H1 (cell line): ENCODE measurements at regions of chr14 and their contacts with region 1.

Region 1: DNA sequence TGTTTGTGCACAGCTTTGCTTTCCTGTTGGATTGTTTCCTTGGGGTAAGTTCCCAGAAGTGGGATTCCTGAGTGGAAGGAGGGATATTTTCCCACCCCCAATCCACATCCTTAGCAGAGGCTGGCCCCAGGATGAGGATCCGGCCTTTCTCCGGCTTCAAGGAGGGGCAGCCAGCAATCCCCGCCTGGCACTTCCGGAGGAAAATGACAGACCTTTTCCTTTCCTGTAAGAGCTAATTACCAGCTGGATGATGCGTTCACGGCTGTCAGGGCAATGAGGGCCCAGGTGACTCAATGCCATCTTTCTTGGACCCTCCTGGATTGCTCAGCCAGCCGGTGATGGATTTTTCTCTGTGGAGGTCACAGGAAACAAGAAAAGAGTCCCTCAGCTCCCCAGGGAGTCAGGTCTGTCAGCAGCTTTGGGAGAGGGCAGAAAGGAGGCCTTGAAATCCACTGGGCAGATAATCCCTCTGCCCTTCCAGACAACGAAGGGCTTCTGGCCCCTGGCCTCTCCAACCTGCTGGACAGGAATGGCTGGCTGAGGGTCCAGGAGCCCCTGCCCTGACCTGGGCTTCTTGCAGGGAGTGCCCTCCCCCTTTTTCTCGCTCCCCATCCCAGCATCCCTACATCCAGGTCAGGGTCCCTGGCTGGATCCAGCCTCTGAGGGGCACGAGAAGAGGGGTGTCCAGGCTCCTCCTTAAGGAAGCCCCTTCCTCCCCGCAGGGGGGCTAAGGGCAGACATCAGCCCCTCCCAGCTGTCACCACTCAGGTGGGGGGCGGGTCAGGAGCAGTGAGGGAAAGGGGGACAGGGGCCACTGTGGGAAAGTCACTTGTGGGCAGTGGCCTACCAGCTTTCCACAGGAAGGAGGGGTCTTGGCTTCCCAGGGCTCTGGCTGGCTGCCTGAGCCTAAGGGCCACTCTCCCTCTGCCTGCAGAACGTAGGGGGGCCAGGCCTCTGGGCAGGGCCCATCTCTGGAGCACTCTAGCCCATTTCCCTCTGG is 16.1 kb upstream of the CCDC85C start:
- DNase-seq: no peak
- H3K4me3 ChIP-seq: no peak overlapping the region
- H3K27ac ChIP-seq: no peak overlapping the region
- H3K4me1 ChIP-seq: peaks cover 0 to 5% (median 1%) of the 10 kb centered on the region in 4 experiments; a peak in 3 of 7 replicates
- H3K27me3 ChIP-seq: no peaks in the 10 kb centered on the region; a peak in 1 of 7 replicates
- CTCF ChIP-seq: no peak
- EP300 ChIP-seq: no peak
- POLR2A ChIP-seq: no peak
- RAD21 ChIP-seq: no peak

Region 2: GRCh38 chr14:99537399-99537798 is 82.7 kb before region 1 on chr14:
- CTCF ChIA-PET with region 1: interaction called, 12 read pairs
- POLR2A ChIA-PET with region 1: no interaction called
- DNase-seq: no peak
- H3K4me3 ChIP-seq: no peak overlapping the region
- H3K27ac ChIP-seq: no peak overlapping the region
- H3K4me1 ChIP-seq: peaks cover 0 to 38% (median 20%) of the 10 kb centered on the region in 4 experiments; a peak in 6 of 7 replicates
- H3K27me3 ChIP-seq: no peaks in the 10 kb centered on the region
- CTCF ChIP-seq: no peak
- EP300 ChIP-seq: no peak
- POLR2A ChIP-seq: no peak
- RAD21 ChIP-seq: no peak

Region 3: GRCh38 chr14:99604283-99604765 is 15.8 kb before region 1 on chr14:
- CTCF ChIA-PET with region 1: interaction called, 37 read pairs
- POLR2A ChIA-PET with region 1: interaction called, 10 read pairs
- DNase-seq: peak; percentile 82 to 95
- H3K4me3 ChIP-seq: peak overlapping the region; percentile 76 to 87 (median 82)
- H3K27ac ChIP-seq: no peak overlapping the region
- H3K4me1 ChIP-seq: peaks cover 4 to 28% (median 17%) of the 10 kb centered on the region in 4 experiments
- H3K27me3 ChIP-seq: peaks cover 9 to 34% (median 26%) of the 10 kb centered on the region in 4 experiments; a peak in 6 of 7 replicates
- CTCF ChIP-seq: no peak
- EP300 ChIP-seq: peak in 1 of 2 experiments; percentile 99; a peak in 2 of 3 replicates
- POLR2A ChIP-seq: no peak
- RAD21 ChIP-seq: no peak

Region 4: DNA sequence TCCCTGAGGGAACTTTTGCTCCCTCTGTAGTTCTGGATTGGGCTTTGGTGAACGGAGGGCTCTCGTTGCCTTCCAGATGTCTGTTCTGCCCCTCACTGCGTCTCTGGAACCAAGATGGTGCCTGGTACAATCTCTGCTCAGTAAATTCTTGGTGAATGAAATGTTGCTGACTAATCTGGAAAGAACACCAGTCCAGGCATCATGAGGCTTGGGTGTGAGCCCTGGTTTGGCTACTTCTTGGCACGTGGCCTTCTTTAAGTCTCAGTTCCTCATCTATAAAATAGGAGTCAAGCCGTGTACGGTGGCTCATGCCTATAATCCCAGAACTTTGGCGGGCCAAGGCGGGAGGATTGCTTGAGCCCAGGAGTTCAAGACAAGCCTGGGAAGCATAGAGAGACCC is 29.1 kb after region 1 on chr14:
- CTCF ChIA-PET with region 1: no interaction called
- POLR2A ChIA-PET with region 1: no interaction called
- DNase-seq: no peak
- H3K4me3 ChIP-seq: no peak overlapping the region
- H3K27ac ChIP-seq: no peak overlapping the region
- H3K4me1 ChIP-seq: peaks cover 0 to 12% (median 5%) of the 10 kb centered on the region in 4 experiments; a peak in 5 of 7 replicates
- H3K27me3 ChIP-seq: peaks cover 0 to 20% (median 15%) of the 10 kb centered on the region in 4 experiments; a peak in 6 of 7 replicates
- CTCF ChIP-seq: no peak
- EP300 ChIP-seq: no peak
- POLR2A ChIP-seq: no peak
- RAD21 ChIP-seq: no peak